ENCODE measurements at regions of chr2 and their contacts with region 1.

Region 1: GRCh38 chr2:174748948-174749347 is 15.3 kb downstream of the CHRNA1 start:
- DNase-seq: peak; percentile 66
- ATAC-seq: peak; percentile 99
- H3K4me3 ChIP-seq: no peak overlapping the region
- H3K27ac ChIP-seq: no peak overlapping the region
- H3K4me1 ChIP-seq: peaks cover 5 to 7% of the 10 kb centered on the region in 2 experiments
- H3K27me3 ChIP-seq: no peaks in the 10 kb centered on the region
- CTCF ChIP-seq: peak; percentile 72 to 83 (median 77)
- POLR2A ChIP-seq: no peak
- RAD21 ChIP-seq: peak; percentile 79

Region 2: DNA sequence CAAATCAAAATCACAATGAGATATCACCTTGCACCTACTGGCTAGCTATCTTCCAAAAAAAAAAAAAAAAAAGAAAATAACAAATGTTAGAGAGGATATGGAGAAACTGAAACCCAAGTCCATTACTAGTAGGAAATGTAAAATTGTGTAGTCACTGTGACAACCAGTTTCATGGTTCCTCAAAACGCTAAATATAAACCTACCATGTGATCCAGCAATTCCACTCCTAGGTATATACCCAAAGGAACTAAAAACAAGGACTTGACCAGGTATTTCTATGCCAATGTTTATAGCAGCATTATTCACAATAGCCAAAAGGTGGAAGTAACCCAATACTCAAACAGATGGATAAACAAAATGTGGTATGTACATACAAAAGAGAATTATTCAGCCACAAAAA is 365.2 kb before region 1 on chr2:
- CTCF ChIA-PET with region 1: no interaction called
- POLR2A ChIA-PET with region 1: no interaction called
- RAD21 ChIA-PET with region 1: no interaction called
- intact Hi-C with region 1: no loop called
- DNase-seq: no peak
- ATAC-seq: no peak
- H3K4me3 ChIP-seq: no peak overlapping the region
- H3K27ac ChIP-seq: no peak overlapping the region
- H3K4me1 ChIP-seq: no peaks in the 10 kb centered on the region
- H3K27me3 ChIP-seq: no peaks in the 10 kb centered on the region
- CTCF ChIP-seq: no peak
- POLR2A ChIP-seq: no peak
- RAD21 ChIP-seq: no peak

Region 3: DNA sequence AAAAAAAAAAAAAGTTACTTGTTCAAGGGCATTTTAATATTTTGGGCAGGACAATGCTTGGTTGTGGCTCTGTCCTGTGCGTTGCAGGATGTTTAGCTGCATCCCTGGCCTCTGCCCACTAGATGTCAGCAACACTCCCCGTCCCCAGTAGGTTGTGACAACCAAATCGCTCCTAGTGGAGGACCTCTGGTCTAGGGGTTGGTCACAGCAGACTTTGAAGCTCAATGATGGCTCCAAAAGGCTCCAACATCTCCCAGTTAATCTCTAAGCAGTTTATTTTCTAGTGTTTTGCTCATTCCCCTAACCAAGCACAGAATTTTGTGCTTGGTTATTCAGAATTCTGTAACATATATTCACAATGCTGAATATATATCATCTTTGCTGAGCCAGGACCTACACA is 51.7 kb before region 1 on chr2:
- CTCF ChIA-PET with region 1: interaction called, 18 read pairs
- POLR2A ChIA-PET with region 1: no interaction called
- RAD21 ChIA-PET with region 1: interaction called in 1 of 2 experiments, 4 read pairs
- intact Hi-C with region 1: loop called (anchors 1 kb)
- DNase-seq: peak; percentile 59
- ATAC-seq: peak; percentile 100
- H3K4me3 ChIP-seq: no peak overlapping the region
- H3K27ac ChIP-seq: no peak overlapping the region
- H3K4me1 ChIP-seq: no peaks in the 10 kb centered on the region
- H3K27me3 ChIP-seq: peaks cover 3% of the 10 kb centered on the region; the same call in 1 of the 2 replicates
- CTCF ChIP-seq: peak; percentile 75 to 93 (median 84)
- POLR2A ChIP-seq: no peak
- RAD21 ChIP-seq: peak; percentile 70

Region 4: GRCh38 chr2:174764280-174765255 is 15.6 kb after region 1 on chr2 and contains the start of gene CHRNA1:
- CTCF ChIA-PET with region 1: interaction called, 18 read pairs
- POLR2A ChIA-PET with region 1: no interaction called
- RAD21 ChIA-PET with region 1: no interaction called
- intact Hi-C with region 1: no loop called
- DNase-seq: no peak
- ATAC-seq: no peak
- H3K4me3 ChIP-seq: no peak within 1 kb of the TSS
- H3K27ac ChIP-seq: no peak within 1 kb of the TSS
- H3K4me1 ChIP-seq: no peaks in the 10 kb centered on the region
- H3K27me3 ChIP-seq: no peaks in the 10 kb centered on the region
- CTCF ChIP-seq: no peak
- POLR2A ChIP-seq: no peak
- RAD21 ChIP-seq: no peak
- total RNA-seq, gene CHRNA1: not detected

Region 5: GRCh38 chr2:174771631-174772471 is 22.9 kb after region 1 on chr2:
- CTCF ChIA-PET with region 1: interaction called, 25 read pairs
- POLR2A ChIA-PET with region 1: interaction called, 3 read pairs
- RAD21 ChIA-PET with region 1: interaction called, 5 to 6 read pairs
- intact Hi-C with region 1: no loop called
- DNase-seq: peak; percentile 44
- ATAC-seq: peak; percentile 98
- H3K4me3 ChIP-seq: no peak overlapping the region
- H3K27ac ChIP-seq: no peak overlapping the region
- H3K4me1 ChIP-seq: peaks cover 0 to 12% of the 10 kb centered on the region in 2 experiments; a peak in 2 of 4 replicates
- H3K27me3 ChIP-seq: no peaks in the 10 kb centered on the region
- CTCF ChIP-seq: peak; percentile 87 to 89 (median 87)
- POLR2A ChIP-seq: no peak
- RAD21 ChIP-seq: peak; percentile 93

Region 6: DNA sequence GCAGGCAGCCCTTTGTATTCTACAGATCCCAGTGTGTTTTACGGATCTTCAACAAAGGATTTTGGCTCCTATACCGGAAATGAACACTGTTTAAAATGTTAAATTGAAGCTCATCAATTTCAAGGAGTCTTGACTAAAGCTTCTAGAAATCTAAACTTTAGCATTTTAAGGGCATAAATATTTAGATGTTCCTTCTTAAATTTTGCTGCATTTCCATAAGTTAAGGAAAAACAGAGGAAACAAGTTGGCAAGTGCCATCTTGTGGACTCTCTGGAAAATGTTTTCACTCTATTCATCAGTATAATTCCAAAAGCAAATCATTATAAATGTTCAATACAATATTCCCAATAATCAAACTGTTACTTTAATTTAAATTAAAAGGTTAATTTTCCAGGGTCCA is 236.7 kb after region 1 on chr2:
- CTCF ChIA-PET with region 1: interaction called, 13 read pairs
- POLR2A ChIA-PET with region 1: no interaction called
- RAD21 ChIA-PET with region 1: interaction called, 3 to 5 read pairs
- intact Hi-C with region 1: no loop called
- DNase-seq: no peak
- ATAC-seq: no peak
- H3K4me3 ChIP-seq: no peak overlapping the region
- H3K27ac ChIP-seq: no peak overlapping the region
- H3K4me1 ChIP-seq: no peaks in the 10 kb centered on the region; a peak in 2 of 4 replicates
- H3K27me3 ChIP-seq: no peaks in the 10 kb centered on the region
- CTCF ChIP-seq: peak; percentile 44 to 81 (median 64)
- POLR2A ChIP-seq: no peak
- RAD21 ChIP-seq: peak; percentile 77